PC-3 (cell line): ENCODE measurements at regions of chr11 and their contacts with region 1.

Region 1: DNA sequence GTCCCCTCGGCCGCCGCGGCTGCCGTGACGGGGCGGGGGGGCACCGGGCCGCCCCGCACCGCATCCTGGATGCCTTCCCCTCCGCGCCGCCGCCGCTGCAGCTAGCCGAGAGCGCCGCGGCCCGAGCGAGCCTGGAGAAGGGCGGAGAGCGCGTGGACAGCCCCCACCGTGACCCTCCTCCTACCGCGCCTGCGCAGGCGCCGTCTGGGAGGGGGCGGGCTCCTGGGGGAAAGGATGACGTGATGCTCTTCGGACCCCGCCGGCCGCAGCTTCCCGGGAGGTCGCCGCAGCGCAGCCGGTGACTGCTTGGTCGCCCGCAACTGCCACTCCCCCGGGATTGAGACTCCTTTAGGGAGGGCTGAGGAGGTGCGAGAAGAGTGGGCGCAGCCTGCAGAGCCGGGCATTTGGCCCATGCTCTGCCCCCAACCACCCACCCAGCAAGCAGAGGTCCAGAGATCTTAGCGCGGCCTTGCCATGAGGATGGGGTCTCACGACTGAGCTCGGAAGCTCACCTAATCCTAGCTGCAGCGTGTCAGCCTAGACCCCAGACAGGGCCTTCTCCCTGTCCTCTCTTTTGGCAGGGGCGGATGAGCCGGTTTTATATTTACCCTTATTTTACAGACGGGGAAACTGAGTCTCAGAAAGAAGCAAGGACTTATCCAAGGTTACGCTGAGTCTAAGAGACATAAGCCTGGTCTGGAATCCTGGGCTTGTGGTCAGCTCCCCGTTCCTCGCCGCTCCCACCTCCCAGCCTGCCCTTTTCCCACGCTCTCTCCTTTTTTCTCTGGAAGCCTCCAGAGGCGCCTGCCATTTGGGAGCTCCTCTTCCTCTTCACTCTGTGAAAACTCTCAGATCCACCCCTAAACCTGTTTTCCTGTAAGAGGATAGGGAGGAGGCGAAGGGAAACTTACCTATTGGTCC is at the start of gene DENND5A:
- DNase-seq: peak; percentile 75
- ATAC-seq: peak; percentile 78
- H3K4me3 ChIP-seq: peak within 1 kb of the TSS; percentile 80
- H3K27ac ChIP-seq: no peak within 1 kb of the TSS
- H3K4me1 ChIP-seq: no peaks in the 10 kb centered on the region; the same call in 1 of the 2 replicates
- H3K27me3 ChIP-seq: no peaks in the 10 kb centered on the region
- CTCF ChIP-seq: no peak
- total RNA-seq, gene DENND5A: 37.7 and 46.9 TPM in 2 replicates

Region 2: GRCh38 chr11:9160166-9160565 is 105.3 kb before region 1 on chr11:
- CTCF ChIA-PET with region 1: no interaction called
- POLR2A ChIA-PET with region 1: no interaction called
- intact Hi-C with region 1: loop called (anchors 10 kb)
- DNase-seq: no peak
- ATAC-seq: peak; percentile 51
- H3K4me3 ChIP-seq: no peak overlapping the region
- H3K27ac ChIP-seq: no peak overlapping the region
- H3K4me1 ChIP-seq: peaks cover 12% of the 10 kb centered on the region
- H3K27me3 ChIP-seq: no peaks in the 10 kb centered on the region
- CTCF ChIP-seq: no peak

Region 3: GRCh38 chr11:9280655-9281301 is 15.3 kb after region 1 on chr11:
- CTCF ChIA-PET with region 1: no interaction called
- POLR2A ChIA-PET with region 1: no interaction called
- intact Hi-C with region 1: no loop called
- DNase-seq: peak; percentile 77
- ATAC-seq: peak; percentile 61
- H3K4me3 ChIP-seq: no peak overlapping the region
- H3K27ac ChIP-seq: no peak overlapping the region
- H3K4me1 ChIP-seq: peaks cover 8% of the 10 kb centered on the region; the same call in 1 of the 2 replicates
- H3K27me3 ChIP-seq: no peaks in the 10 kb centered on the region
- CTCF ChIP-seq: no peak

Region 4: DNA sequence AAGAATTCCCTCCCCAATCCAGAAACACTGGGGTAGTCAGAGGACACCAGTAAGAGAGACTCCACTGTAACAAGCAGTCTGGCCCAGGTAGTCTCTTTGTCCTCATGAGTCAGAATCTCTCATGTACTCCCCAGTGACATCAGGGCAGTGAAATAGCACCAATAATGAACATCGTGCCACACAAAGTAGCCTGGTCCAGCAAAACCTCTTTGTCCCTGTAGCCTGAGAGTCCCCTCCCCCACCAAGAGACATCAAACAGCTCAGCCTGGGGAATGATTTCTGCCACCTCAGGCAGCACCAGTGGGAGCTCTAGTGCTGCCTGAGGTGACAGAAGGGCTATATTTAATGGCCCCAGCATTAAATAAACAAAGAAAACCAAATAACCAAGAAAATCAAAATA is 940.5 kb after region 1 on chr11:
- CTCF ChIA-PET with region 1: no interaction called
- POLR2A ChIA-PET with region 1: no interaction called
- intact Hi-C with region 1: no loop called
- DNase-seq: no peak
- ATAC-seq: no peak
- H3K4me3 ChIP-seq: no peak overlapping the region
- H3K27ac ChIP-seq: no peak overlapping the region
- H3K4me1 ChIP-seq: no peaks in the 10 kb centered on the region
- H3K27me3 ChIP-seq: no peaks in the 10 kb centered on the region
- CTCF ChIP-seq: no peak